Mammary epithelial cell (primary cell): ENCODE measurements at regions of chr2 and their contacts with region 1.

Region 1: GRCh38 chr2:200765139-200765951 is 46.4 kb upstream of the BZW1 start:
- DNase-seq: peak; percentile 94
- H3K4me3 ChIP-seq: no peak overlapping the region
- H3K27ac ChIP-seq: peak overlapping the region; percentile 83
- H3K4me1 ChIP-seq: peaks cover 59% of the 10 kb centered on the region
- H3K27me3 ChIP-seq: no peaks in the 10 kb centered on the region
- CTCF ChIP-seq: no peak

Region 2: GRCh38 chr2:200787348-200788120 is 22.2 kb after region 1 on chr2:
- CTCF ChIA-PET with region 1: no interaction called
- dilution Hi-C with region 1: no loop called
- in situ Hi-C with region 1: no loop called
- intact Hi-C with region 1: loop called (anchors 1 kb)
- DNase-seq: peak; percentile 96
- H3K4me3 ChIP-seq: peak overlapping the region in 1 of 3 experiments; percentile 8
- H3K27ac ChIP-seq: peak overlapping the region; percentile 94
- H3K4me1 ChIP-seq: peaks cover 44% of the 10 kb centered on the region
- H3K27me3 ChIP-seq: no peaks in the 10 kb centered on the region
- CTCF ChIP-seq: no peak

Region 3: GRCh38 chr2:200864176-200864976 is 99.0 kb after region 1 on chr2 and contains the start of gene CLK1:
- CTCF ChIA-PET with region 1: no interaction called
- dilution Hi-C with region 1: no loop called
- in situ Hi-C with region 1: no loop called
- intact Hi-C with region 1: loop called (anchors 5 kb)
- DNase-seq: peak; percentile 92
- H3K4me3 ChIP-seq: peak within 1 kb of the TSS; percentile 82 to 100 (median 99)
- H3K27ac ChIP-seq: peak within 1 kb of the TSS; percentile 99
- H3K4me1 ChIP-seq: peaks cover 22% of the 10 kb centered on the region
- H3K27me3 ChIP-seq: no peaks in the 10 kb centered on the region
- CTCF ChIP-seq: no peak
- total RNA-seq, gene CLK1: 55.0 to 55.2 TPM